Mammary epithelial cell (primary cell): ENCODE measurements at regions of chr7 and their contacts with region 1.

Region 1: GRCh38 chr7:23298885-23299769 is at the start of gene MALSU1:
- DNase-seq: peak; percentile 93
- H3K4me3 ChIP-seq: peak within 1 kb of the TSS; percentile 87 to 96 (median 92)
- H3K27ac ChIP-seq: peak within 1 kb of the TSS; percentile 63
- H3K4me1 ChIP-seq: peaks cover 18% of the 10 kb centered on the region
- H3K27me3 ChIP-seq: no peaks in the 10 kb centered on the region
- CTCF ChIP-seq: no peak
- total RNA-seq, gene MALSU1: 42.2 to 65.0 TPM

Region 2: DNA sequence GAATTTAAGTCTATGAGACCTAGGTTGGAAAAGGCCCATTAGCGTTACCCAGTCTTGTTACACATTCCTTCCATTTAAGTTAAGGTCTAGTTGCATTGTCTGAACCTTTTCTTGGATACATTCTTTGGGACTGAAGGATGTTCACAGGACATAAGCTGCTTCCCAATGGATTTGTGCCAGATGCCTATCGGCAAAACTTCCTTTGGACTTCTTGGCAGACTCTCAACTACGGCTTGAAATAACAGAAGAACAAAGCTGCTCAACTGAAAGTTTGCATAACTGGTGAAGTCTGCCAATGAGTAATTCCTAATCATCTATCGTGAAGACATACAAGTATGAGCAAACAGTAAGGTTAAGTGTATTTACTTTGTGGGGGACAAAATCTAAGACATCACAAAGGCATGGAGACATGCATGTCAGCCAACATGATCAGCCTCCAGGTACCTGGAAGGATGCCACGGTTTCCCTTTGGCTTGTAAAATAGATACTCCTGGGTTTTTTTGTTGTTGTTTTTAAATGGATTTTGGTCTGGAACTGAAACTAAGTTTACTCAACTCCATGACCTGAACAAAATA is 35.4 kb after region 1 on chr7:
- CTCF ChIA-PET with region 1: no interaction called
- dilution Hi-C with region 1: loop called (anchors 5 kb)
- in situ Hi-C with region 1: no loop called
- intact Hi-C with region 1: loop called (anchors 5 kb)
- DNase-seq: peak; percentile 97
- H3K4me3 ChIP-seq: no peak overlapping the region
- H3K27ac ChIP-seq: peak overlapping the region; percentile 6
- H3K4me1 ChIP-seq: peaks cover 30% of the 10 kb centered on the region
- H3K27me3 ChIP-seq: no peaks in the 10 kb centered on the region
- CTCF ChIP-seq: no peak

Region 3: GRCh38 chr7:23347682-23348180 is 48.6 kb after region 1 on chr7:
- CTCF ChIA-PET with region 1: no interaction called
- dilution Hi-C with region 1: no loop called
- in situ Hi-C with region 1: no loop called
- intact Hi-C with region 1: loop called (anchors 2 kb)
- DNase-seq: peak; percentile 80
- H3K4me3 ChIP-seq: peak overlapping the region in 2 of 3 experiments; percentile 19 to 39
- H3K27ac ChIP-seq: peak overlapping the region; percentile 77
- H3K4me1 ChIP-seq: peaks cover 39% of the 10 kb centered on the region
- H3K27me3 ChIP-seq: no peaks in the 10 kb centered on the region
- CTCF ChIP-seq: no peak

Region 4: GRCh38 chr7:23396222-23397015 is 97.3 kb after region 1 on chr7:
- CTCF ChIA-PET with region 1: no interaction called
- dilution Hi-C with region 1: no loop called
- in situ Hi-C with region 1: no loop called
- intact Hi-C with region 1: no loop called
- DNase-seq: no peak
- H3K4me3 ChIP-seq: no peak overlapping the region
- H3K27ac ChIP-seq: no peak overlapping the region
- H3K4me1 ChIP-seq: no peaks in the 10 kb centered on the region
- H3K27me3 ChIP-seq: no peaks in the 10 kb centered on the region
- CTCF ChIP-seq: no peak

Region 5: GRCh38 chr7:23531794-23532489 is 232.8 kb after region 1 on chr7 and contains the start of gene TRA2A:
- CTCF ChIA-PET with region 1: no interaction called
- dilution Hi-C with region 1: no loop called
- in situ Hi-C with region 1: no loop called
- intact Hi-C with region 1: loop called (anchors 2 kb)
- DNase-seq: peak; percentile 90
- H3K4me3 ChIP-seq: peak within 1 kb of the TSS; percentile 79 to 94 (median 90)
- H3K27ac ChIP-seq: peak within 1 kb of the TSS; percentile 99
- H3K4me1 ChIP-seq: peaks cover 9% of the 10 kb centered on the region
- H3K27me3 ChIP-seq: no peaks in the 10 kb centered on the region
- CTCF ChIP-seq: no peak
- total RNA-seq, gene TRA2A: 25.5 to 95.2 TPM

Region 6: GRCh38 chr7:23712368-23713284 is 413.5 kb after region 1 on chr7:
- CTCF ChIA-PET with region 1: no interaction called
- dilution Hi-C with region 1: no loop called
- in situ Hi-C with region 1: loop called in 1 of 2 experiments (anchors 25 kb)
- intact Hi-C with region 1: no loop called
- DNase-seq: peak; percentile 60
- H3K4me3 ChIP-seq: no peak overlapping the region
- H3K27ac ChIP-seq: no peak overlapping the region
- H3K4me1 ChIP-seq: peaks cover 20% of the 10 kb centered on the region
- H3K27me3 ChIP-seq: no peaks in the 10 kb centered on the region
- CTCF ChIP-seq: peak; percentile 35 to 46